Psoas muscle (tissue), 8 donors: ENCODE measurements at regions of chr1 and their contacts with region 1.

Region 1: GRCh38 chr1:26321315-26322041 is 3.7 kb downstream of the CD52 start:
- DNase-seq: peak; percentile 91 to 96
- ATAC-seq: peak; percentile 87 to 96 (median 96)
- H3K4me3 ChIP-seq: no peak overlapping the region
- H3K27ac ChIP-seq: no peak overlapping the region
- H3K4me1 ChIP-seq: peaks cover 4% of the 10 kb centered on the region
- H3K27me3 ChIP-seq: peaks cover 0 to 3% (median 0%) of the 10 kb centered on the region in 3 donors
- CTCF ChIP-seq: peak; percentile 85

Region 2: DNA sequence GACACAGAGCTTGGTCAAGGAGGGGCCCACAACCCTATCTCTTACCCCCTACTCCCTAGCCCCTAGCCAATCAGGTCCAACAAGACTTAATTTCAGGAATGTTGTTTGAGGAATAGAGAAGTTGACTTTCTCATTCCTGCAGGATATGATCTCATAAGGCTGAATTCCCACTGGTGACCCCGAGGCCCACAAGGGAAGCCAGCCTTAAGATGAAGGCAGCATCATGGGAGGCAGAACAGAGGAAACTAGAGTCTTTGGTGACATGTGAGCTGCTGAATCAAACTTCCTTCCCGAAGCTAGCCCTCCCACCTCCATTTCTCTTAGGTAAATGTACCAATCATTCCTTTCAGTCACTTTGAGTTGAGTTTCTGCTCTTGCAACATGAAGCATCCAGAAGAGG is 219.0 kb before region 1 on chr1:
- intact Hi-C with region 1: loop called in 1 of 2 experiments (anchors 10 kb)
- DNase-seq: no peak
- ATAC-seq: no peak
- H3K4me3 ChIP-seq: no peak overlapping the region
- H3K27ac ChIP-seq: no peak overlapping the region
- H3K4me1 ChIP-seq: peaks cover 10% of the 10 kb centered on the region
- H3K27me3 ChIP-seq: no peaks in the 10 kb centered on the region
- CTCF ChIP-seq: no peak

Region 3: GRCh38 chr1:26169669-26170471 is 151.6 kb before region 1 on chr1 and contains the start of gene ZNF593:
- intact Hi-C with region 1: loop called (anchors 5 to 10 kb)
- DNase-seq: peak; percentile 93 to 97
- ATAC-seq: peak; percentile 94 to 97 (median 96)
- H3K4me3 ChIP-seq: peak within 1 kb of the TSS; percentile 77
- H3K27ac ChIP-seq: peak within 1 kb of the TSS; percentile 90
- H3K4me1 ChIP-seq: peaks cover 17% of the 10 kb centered on the region
- H3K27me3 ChIP-seq: no peaks in the 10 kb centered on the region
- CTCF ChIP-seq: peak; percentile 90
- total RNA-seq, gene ZNF593: 75.2 to 116 (median 78.3) TPM

Region 4: DNA sequence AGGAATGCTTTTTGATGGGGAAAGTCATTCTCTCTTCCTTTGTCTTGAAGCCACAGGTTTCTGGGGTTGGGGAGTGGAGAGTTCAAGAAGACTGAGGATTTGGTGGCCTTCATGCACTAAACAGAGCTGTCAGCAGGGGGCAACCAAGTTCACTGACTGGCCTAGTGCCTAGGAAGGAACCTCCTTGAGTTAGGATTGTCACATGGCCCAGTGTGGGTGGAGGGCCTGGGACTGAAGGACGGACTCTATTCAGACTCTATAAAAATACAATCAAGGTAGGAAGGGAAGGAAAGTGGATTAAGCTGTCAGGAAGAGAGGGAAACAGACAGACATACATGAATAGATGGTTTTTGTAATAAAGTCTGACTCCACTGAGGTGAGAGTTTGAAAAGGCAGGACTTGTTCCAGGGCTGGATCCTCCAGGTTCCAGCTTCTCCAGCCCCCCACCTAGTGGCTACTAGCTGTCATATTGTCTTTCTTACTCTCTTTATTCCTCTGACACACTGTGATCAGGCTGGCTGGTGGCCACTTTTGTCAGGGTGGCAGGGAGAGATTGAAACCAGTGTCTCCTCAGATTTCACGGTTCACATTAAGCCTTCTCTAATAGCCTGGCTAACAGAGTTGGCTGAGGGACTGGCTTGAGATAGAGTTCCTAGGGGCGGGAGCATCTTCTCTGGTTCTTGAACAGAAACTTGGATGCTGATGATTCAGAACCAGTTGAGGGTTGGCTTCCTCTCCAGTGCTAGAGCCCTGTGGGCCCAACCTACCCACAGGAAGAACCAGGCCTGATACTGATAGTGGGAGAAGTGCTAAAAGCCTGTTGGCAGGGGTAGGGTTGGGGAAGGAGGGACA is 45.7 kb before region 1 on chr1:
- intact Hi-C with region 1: loop called in 1 of 2 experiments (anchors 1 kb)
- DNase-seq: peak; percentile 80 to 86
- ATAC-seq: peak; percentile 72 to 79 (median 76)
- H3K4me3 ChIP-seq: peak overlapping the region; percentile 32
- H3K27ac ChIP-seq: peak overlapping the region; percentile 92
- H3K4me1 ChIP-seq: peaks cover 64% of the 10 kb centered on the region
- H3K27me3 ChIP-seq: no peaks in the 10 kb centered on the region
- CTCF ChIP-seq: peak; percentile 66

Region 5: GRCh38 chr1:26285366-26286063 is 36.0 kb before region 1 on chr1:
- intact Hi-C with region 1: loop called in 1 of 2 experiments (anchors 2 kb)
- DNase-seq: peak; percentile 66 to 81
- ATAC-seq: peak; percentile 25 to 54 (median 40)
- H3K4me3 ChIP-seq: no peak overlapping the region
- H3K27ac ChIP-seq: peak overlapping the region; percentile 80
- H3K4me1 ChIP-seq: peaks cover 48% of the 10 kb centered on the region
- H3K27me3 ChIP-seq: no peaks in the 10 kb centered on the region
- CTCF ChIP-seq: peak; percentile 35

Region 6: GRCh38 chr1:26472901-26473845 is 151.7 kb after region 1 on chr1:
- intact Hi-C with region 1: no loop called
- DNase-seq: peak; percentile 97 to 99
- ATAC-seq: peak; percentile 88 to 94 (median 92)
- H3K4me3 ChIP-seq: peak overlapping the region; percentile 97
- H3K27ac ChIP-seq: peak overlapping the region; percentile 99
- H3K4me1 ChIP-seq: peaks cover 26% of the 10 kb centered on the region
- H3K27me3 ChIP-seq: no peaks in the 10 kb centered on the region
- CTCF ChIP-seq: no peak